H1 (cell line): ENCODE measurements at regions of chr15 and their contacts with region 1.

Region 1: GRCh38 chr15:101014921-101015841 is 96.0 kb downstream of the LRRK1 start:
- DNase-seq: peak in 1 of 2 experiments; percentile 92
- H3K4me3 ChIP-seq: no peak overlapping the region
- H3K27ac ChIP-seq: no peak overlapping the region
- H3K4me1 ChIP-seq: peaks cover 0 to 9% (median 4%) of the 10 kb centered on the region in 4 experiments; a peak in 5 of 7 replicates
- H3K27me3 ChIP-seq: no peaks in the 10 kb centered on the region
- CTCF ChIP-seq: peak; percentile 88 to 97 (median 95)
- EP300 ChIP-seq: no peak
- POLR2A ChIP-seq: no peak
- RAD21 ChIP-seq: peak; percentile 98 to 99

Region 2: GRCh38 chr15:101031213-101031612 is 16.0 kb after region 1 on chr15:
- CTCF ChIA-PET with region 1: interaction called, 24 read pairs
- POLR2A ChIA-PET with region 1: interaction called, 3 read pairs
- DNase-seq: peak in 1 of 2 experiments; percentile 32
- H3K4me3 ChIP-seq: no peak overlapping the region
- H3K27ac ChIP-seq: no peak overlapping the region
- H3K4me1 ChIP-seq: no peaks in the 10 kb centered on the region
- H3K27me3 ChIP-seq: no peaks in the 10 kb centered on the region; a peak in 1 of 7 replicates
- CTCF ChIP-seq: no peak
- EP300 ChIP-seq: no peak
- POLR2A ChIP-seq: no peak
- RAD21 ChIP-seq: no peak

Region 3: GRCh38 chr15:101070502-101071273 is 55.5 kb after region 1 on chr15:
- CTCF ChIA-PET with region 1: interaction called, 39 read pairs
- POLR2A ChIA-PET with region 1: interaction called, 3 read pairs
- DNase-seq: no peak
- H3K4me3 ChIP-seq: no peak overlapping the region
- H3K27ac ChIP-seq: peak overlapping the region; percentile 92
- H3K4me1 ChIP-seq: peaks cover 22 to 39% (median 30%) of the 10 kb centered on the region in 4 experiments
- H3K27me3 ChIP-seq: no peaks in the 10 kb centered on the region
- CTCF ChIP-seq: no peak
- EP300 ChIP-seq: no peak
- POLR2A ChIP-seq: no peak
- RAD21 ChIP-seq: no peak

Region 4: DNA sequence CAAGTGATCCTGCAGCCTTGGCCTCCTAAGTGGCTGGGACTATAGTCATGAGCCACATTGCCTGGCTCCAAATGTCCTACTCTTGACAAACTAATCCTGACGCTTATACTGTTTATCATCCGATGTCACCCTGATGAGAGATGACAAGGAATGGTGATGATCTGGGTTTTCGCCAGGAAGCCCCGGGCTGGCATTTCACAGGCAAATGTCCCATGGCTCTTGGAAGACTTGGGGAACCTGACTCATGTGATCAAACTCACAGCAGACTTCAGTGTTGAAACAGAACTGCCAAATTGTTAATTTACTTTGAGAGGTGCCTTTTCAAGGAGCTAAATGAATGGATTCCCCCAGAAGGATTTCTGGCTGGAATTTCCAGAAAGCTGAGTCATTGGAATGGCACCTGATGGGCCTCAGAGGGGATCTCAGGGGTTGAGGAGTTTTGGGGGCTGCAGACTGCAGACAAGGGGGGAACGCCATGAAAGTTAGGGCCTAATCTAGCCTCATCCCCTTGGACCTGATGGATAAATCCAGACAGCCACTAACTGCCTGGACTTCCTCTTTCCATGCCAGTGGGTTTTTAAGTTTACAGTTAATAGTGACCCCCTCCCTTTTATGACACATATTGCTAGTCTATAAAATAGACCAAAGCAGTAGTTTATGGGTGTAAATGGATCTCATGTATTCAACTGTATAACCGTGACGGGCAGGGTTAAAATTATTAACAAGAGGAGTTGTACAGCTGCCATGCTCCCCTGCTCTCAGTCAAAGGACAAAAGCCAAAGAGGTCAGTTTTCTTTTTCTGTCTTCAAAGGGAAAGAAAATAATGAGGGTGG is 90.1 kb after region 1 on chr15:
- CTCF ChIA-PET with region 1: interaction called, 16 read pairs
- POLR2A ChIA-PET with region 1: no interaction called
- DNase-seq: no peak
- H3K4me3 ChIP-seq: no peak overlapping the region
- H3K27ac ChIP-seq: no peak overlapping the region
- H3K4me1 ChIP-seq: peaks cover 0 to 3% (median 0%) of the 10 kb centered on the region in 4 experiments; a peak in 1 of 7 replicates
- H3K27me3 ChIP-seq: no peaks in the 10 kb centered on the region
- CTCF ChIP-seq: no peak
- EP300 ChIP-seq: no peak
- POLR2A ChIP-seq: no peak
- RAD21 ChIP-seq: no peak

Region 5: GRCh38 chr15:101156509-101157159 is 141.5 kb after region 1 on chr15:
- CTCF ChIA-PET with region 1: interaction called, 12 read pairs
- POLR2A ChIA-PET with region 1: no interaction called
- DNase-seq: no peak
- H3K4me3 ChIP-seq: no peak overlapping the region
- H3K27ac ChIP-seq: no peak overlapping the region
- H3K4me1 ChIP-seq: peaks cover 0 to 6% (median 0%) of the 10 kb centered on the region in 4 experiments; a peak in 3 of 7 replicates
- H3K27me3 ChIP-seq: peaks cover 0 to 2% (median 0%) of the 10 kb centered on the region in 4 experiments; a peak in 1 of 7 replicates
- CTCF ChIP-seq: no peak
- EP300 ChIP-seq: no peak
- POLR2A ChIP-seq: no peak
- RAD21 ChIP-seq: no peak

Region 6: GRCh38 chr15:101258238-101259144 is 243.3 kb after region 1 on chr15:
- CTCF ChIA-PET with region 1: interaction called, 216 read pairs
- POLR2A ChIA-PET with region 1: interaction called, 3 read pairs
- DNase-seq: peak in 1 of 2 experiments; percentile 47
- H3K4me3 ChIP-seq: no peak overlapping the region
- H3K27ac ChIP-seq: no peak overlapping the region
- H3K4me1 ChIP-seq: peaks cover 2 to 13% (median 9%) of the 10 kb centered on the region in 4 experiments; a peak in 5 of 7 replicates
- H3K27me3 ChIP-seq: no peaks in the 10 kb centered on the region
- CTCF ChIP-seq: peak; percentile 55 to 81 (median 79)
- EP300 ChIP-seq: no peak
- POLR2A ChIP-seq: no peak
- RAD21 ChIP-seq: peak; percentile 93 to 94